Endothelial cell of umbilical vein (primary cell): ENCODE measurements at regions of chr19 and their contacts with region 1.

Region 1: DNA sequence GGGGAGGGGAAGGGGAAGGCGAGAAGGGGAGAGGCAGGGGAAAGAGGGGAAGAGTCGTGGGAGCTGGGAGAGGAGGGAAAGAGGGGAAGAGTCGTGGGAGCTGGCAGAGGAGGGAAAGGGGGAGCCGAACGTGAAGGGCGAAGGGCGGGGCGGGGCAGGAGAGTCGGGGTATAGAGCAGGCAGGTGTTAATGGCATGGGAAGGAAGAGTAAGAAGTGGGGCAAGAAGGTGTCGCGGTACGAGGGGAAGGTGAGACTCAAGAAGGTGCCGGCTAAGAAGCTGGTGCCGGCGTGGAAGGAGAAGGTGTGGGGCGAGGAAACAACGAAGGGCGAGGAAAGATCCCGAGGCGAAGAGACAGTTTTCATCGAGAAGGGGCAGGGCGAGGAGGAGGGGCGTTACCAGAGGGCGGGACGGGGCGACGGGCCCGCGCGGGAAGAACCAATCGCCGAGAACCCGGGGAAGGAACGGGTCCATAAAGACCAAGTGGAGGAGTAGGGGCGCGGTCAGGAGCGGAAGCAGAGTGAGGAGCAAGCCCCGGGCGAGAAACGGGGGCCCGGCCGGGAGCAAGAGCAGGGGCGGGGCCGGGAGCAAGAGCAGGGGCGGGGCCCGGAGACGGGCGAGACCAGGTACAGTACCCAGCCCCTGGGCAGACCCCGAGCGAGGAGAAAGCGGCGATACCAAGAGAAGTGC is 463 bp downstream of the CATSPERG start:
- DNase-seq: peak; percentile 96
- H3K4me3 ChIP-seq: peak overlapping the region; percentile 52 to 83 (median 75)
- H3K27ac ChIP-seq: peak overlapping the region; percentile 22
- H3K4me1 ChIP-seq: peaks cover 3% of the 10 kb centered on the region
- H3K27me3 ChIP-seq: no peaks in the 10 kb centered on the region
- CTCF ChIP-seq: no peak
- POLR2A ChIP-seq: no peak

Region 2: GRCh38 chr19:38142176-38143035 is 193.7 kb before region 1 on chr19:
- CTCF ChIA-PET with region 1: no interaction called
- POLR2A ChIA-PET with region 1: no interaction called
- dilution Hi-C with region 1: no loop called
- intact Hi-C with region 1: loop called (anchors 10 kb)
- DNase-seq: peak; percentile 37
- H3K4me3 ChIP-seq: no peak overlapping the region
- H3K27ac ChIP-seq: no peak overlapping the region
- H3K4me1 ChIP-seq: no peaks in the 10 kb centered on the region
- H3K27me3 ChIP-seq: no peaks in the 10 kb centered on the region
- CTCF ChIP-seq: peak; percentile 81 to 84
- POLR2A ChIP-seq: no peak

Region 3: DNA sequence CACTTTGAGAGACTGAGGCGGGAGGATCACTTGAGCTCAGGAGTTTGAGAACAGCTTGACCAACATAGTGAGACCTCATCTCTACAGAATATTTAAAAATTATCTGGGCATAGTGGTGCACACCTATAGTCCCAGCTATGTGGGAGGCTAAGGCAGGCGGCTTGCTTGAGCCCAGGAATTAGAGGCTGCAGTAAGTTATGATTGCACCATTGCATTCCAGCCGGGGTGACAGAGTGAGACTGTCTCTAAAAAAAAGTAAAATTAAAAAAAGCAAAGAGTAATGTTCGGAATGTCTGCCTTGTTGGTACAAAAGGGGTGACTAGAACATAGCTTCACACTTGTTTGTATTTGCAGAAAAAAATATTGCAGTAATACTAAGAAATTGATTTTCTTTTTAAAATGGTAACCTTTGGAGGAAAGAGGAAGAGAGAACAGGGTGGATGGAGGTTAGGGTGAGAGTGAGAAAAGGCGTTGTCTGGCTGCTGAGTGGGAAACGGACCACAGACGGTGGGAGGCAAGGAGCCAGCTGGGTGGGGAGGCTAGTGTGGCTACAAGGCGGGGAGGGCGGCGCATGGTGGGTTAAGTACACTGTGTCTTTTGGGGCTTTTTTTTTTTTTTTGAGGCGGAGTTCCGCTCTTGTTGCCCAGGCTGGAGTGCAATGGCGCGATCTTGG is 90.1 kb before region 1 on chr19:
- CTCF ChIA-PET with region 1: interaction called, 123 read pairs
- POLR2A ChIA-PET with region 1: interaction called, 4 read pairs
- dilution Hi-C with region 1: no loop called
- intact Hi-C with region 1: loop called (anchors 1 kb)
- DNase-seq: no peak
- H3K4me3 ChIP-seq: no peak overlapping the region
- H3K27ac ChIP-seq: no peak overlapping the region
- H3K4me1 ChIP-seq: no peaks in the 10 kb centered on the region
- H3K27me3 ChIP-seq: no peaks in the 10 kb centered on the region
- CTCF ChIP-seq: no peak
- POLR2A ChIP-seq: no peak

Region 4: GRCh38 chr19:38315657-38316476 is 20.2 kb before region 1 on chr19 and contains the start of gene YIF1B:
- CTCF ChIA-PET with region 1: interaction called, 16 read pairs
- POLR2A ChIA-PET with region 1: no interaction called
- dilution Hi-C with region 1: no loop called
- intact Hi-C with region 1: loop called (anchors 1 kb)
- DNase-seq: peak; percentile 95
- H3K4me3 ChIP-seq: peak within 1 kb of the TSS; percentile 65 to 96 (median 95)
- H3K27ac ChIP-seq: peak within 1 kb of the TSS; percentile 59
- H3K4me1 ChIP-seq: peaks cover 39% of the 10 kb centered on the region
- H3K27me3 ChIP-seq: no peaks in the 10 kb centered on the region
- CTCF ChIP-seq: no peak
- POLR2A ChIP-seq: no peak
- total RNA-seq, gene YIF1B: 80.9 and 85.8 TPM in 2 replicates

Region 5: GRCh38 chr19:38374429-38375176 is 38.5 kb after region 1 on chr19 and contains the start of gene PSMD8:
- CTCF ChIA-PET with region 1: interaction called, 20 read pairs
- POLR2A ChIA-PET with region 1: interaction called, 9 read pairs
- dilution Hi-C with region 1: no loop called
- intact Hi-C with region 1: loop called (anchors 1 kb)
- DNase-seq: peak; percentile 99
- H3K4me3 ChIP-seq: peak within 1 kb of the TSS; percentile 70 to 86 (median 70)
- H3K27ac ChIP-seq: peak within 1 kb of the TSS; percentile 87
- H3K4me1 ChIP-seq: peaks cover 14% of the 10 kb centered on the region
- H3K27me3 ChIP-seq: peaks cover 3 to 4% of the 10 kb centered on the region in 2 experiments
- CTCF ChIP-seq: peak in 1 of 2 donors; percentile 33
- POLR2A ChIP-seq: peak; percentile 98
- total RNA-seq, gene PSMD8: 203 and 215 TPM in 2 replicates

Region 6: DNA sequence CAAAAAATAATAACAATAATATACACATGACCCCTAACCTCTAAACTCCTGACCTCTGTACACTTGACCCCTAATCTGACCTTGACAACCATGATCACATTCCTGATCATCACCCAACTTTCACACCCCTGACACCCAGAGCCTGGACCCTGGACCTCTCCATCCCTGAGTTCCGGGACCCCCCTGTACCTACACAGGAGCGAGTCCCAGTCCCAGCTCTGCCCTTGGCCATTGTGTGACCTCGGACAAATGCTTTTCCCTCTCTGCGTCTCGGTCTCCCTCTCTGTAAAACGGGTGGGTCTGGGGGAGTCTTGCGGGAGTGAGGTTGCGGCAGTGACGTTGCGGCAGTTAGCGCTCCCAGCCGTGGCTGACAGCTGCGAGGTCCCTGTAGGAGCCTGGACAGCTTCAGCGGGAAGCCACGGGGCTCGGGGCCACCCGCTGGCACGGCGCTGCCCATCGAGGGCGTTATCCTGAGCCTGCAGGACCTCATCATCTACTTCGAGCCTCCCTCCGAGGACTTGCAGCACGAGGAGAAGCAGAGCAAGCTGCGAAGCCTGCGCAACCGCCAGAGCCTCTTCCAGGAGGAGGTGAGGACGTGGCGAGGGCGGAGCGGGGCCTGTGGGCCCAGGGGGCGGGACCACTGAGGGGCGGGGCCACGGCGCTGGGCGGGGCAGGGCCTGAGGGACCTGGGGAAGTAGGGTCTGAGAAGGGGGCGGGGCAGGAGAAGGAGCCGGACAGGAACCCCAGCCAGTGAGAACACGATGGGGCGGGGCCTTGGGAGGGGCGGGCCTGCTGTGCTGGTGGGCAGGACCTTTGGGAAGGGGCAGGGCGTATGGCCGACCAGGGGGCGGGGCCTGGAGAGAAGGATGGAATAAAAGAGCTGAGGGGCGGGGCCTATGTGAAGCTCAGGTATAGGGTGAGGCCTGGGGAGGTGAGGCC is 116.6 kb after region 1 on chr19:
- CTCF ChIA-PET with region 1: no interaction called
- POLR2A ChIA-PET with region 1: no interaction called
- dilution Hi-C with region 1: no loop called
- intact Hi-C with region 1: no loop called
- DNase-seq: no peak
- H3K4me3 ChIP-seq: no peak overlapping the region
- H3K27ac ChIP-seq: no peak overlapping the region
- H3K4me1 ChIP-seq: no peaks in the 10 kb centered on the region
- H3K27me3 ChIP-seq: no peaks in the 10 kb centered on the region
- CTCF ChIP-seq: no peak
- POLR2A ChIP-seq: no peak

Region 7: DNA sequence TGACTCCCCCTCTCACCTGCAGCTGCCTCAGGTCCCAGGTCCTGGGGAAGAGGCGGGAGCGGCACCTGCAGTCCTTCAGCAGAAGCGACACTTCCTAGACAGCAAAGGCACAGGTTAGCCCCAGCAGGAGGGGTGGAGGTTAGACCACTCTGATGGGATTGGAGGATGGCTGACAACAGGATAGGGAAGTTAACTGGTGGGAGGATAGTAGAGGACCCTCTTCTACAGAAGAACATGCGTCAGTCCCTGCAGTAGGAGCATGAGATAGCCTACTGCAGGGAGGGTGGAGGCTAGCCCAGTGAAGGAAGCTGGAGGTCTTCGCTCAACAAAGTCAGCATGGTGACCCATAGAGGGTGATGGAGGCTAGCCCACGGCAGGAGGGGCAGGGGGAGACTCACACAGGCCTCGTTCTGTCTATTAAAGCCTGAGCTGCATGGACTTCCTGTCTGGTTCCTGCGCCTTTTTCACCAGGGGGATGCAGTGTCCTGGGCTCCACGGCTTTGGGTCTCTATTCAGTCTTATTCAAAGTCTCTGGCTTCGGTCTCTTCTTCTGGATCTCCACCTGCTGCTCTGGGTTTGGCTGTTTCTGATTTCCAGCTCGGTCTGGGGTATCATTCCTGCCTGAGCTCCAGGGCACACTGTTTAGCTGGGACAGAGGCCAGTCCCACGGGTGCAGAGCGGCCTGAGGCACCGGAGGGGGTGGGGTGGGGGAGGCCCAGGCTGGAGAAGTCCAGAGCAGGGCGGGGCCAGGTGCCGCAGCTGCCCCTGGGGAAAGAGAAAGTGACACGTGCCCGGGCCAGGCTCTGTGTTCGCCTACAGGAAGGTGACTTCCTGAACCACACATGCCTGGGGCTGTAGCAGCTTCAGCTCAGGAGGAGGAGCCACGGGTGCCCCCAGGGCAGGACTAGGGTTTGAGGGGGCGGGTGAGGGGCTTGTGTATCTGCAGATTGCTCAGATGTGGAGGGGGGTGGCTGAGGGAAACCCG is 901.4 kb after region 1 on chr19:
- CTCF ChIA-PET with region 1: no interaction called
- POLR2A ChIA-PET with region 1: no interaction called
- dilution Hi-C with region 1: no loop called
- intact Hi-C with region 1: no loop called
- DNase-seq: no peak
- H3K4me3 ChIP-seq: no peak overlapping the region
- H3K27ac ChIP-seq: no peak overlapping the region
- H3K4me1 ChIP-seq: no peaks in the 10 kb centered on the region
- H3K27me3 ChIP-seq: no peaks in the 10 kb centered on the region
- CTCF ChIP-seq: no peak
- POLR2A ChIP-seq: no peak